HAP-1 (cell line): ENCODE measurements at regions of chr5 and their contacts with region 1.

Region 1: GRCh38 chr5:17189381-17190036 is 27.9 kb upstream of the BASP1 start:
- DNase-seq: peak; percentile 78 to 90
- H3K4me3 ChIP-seq: no peak overlapping the region
- H3K4me1 ChIP-seq: peaks cover 21% of the 10 kb centered on the region
- H3K27me3 ChIP-seq: no peaks in the 10 kb centered on the region

Region 2: DNA sequence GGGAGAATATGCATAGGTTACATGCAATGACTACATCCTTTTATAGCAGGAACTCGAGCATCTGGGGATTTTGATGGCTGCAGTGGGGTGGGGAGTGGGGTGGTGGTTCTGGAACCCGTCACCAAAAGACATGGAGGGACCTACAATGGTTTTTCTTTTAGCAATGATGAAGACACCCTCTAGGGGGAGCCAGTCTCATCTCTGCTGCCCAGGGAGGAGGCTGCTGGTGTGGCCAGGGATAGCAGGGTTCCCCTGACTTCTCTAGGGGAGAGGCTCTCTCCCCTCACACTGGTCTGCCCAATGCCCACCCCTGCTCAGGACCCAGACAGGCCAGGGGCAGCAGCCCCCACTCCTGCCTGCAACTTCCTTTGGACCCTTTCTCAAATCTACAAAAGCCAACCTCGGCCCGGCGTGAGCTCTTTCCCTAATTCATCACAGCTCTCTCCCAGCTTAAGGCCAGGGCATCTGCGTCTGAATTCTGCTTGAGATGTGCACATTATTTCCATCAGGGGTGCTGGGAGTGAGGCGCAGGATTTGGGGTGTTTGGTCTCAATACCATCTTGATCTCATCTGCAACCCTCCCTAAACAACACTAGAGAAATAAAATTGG is 499.2 kb before region 1 on chr5:
- in situ Hi-C with region 1: loop called (anchors 25 kb)
- DNase-seq: peak; percentile 50 to 76
- H3K4me3 ChIP-seq: no peak overlapping the region
- H3K4me1 ChIP-seq: peaks cover 9% of the 10 kb centered on the region
- H3K27me3 ChIP-seq: no peaks in the 10 kb centered on the region

Region 3: DNA sequence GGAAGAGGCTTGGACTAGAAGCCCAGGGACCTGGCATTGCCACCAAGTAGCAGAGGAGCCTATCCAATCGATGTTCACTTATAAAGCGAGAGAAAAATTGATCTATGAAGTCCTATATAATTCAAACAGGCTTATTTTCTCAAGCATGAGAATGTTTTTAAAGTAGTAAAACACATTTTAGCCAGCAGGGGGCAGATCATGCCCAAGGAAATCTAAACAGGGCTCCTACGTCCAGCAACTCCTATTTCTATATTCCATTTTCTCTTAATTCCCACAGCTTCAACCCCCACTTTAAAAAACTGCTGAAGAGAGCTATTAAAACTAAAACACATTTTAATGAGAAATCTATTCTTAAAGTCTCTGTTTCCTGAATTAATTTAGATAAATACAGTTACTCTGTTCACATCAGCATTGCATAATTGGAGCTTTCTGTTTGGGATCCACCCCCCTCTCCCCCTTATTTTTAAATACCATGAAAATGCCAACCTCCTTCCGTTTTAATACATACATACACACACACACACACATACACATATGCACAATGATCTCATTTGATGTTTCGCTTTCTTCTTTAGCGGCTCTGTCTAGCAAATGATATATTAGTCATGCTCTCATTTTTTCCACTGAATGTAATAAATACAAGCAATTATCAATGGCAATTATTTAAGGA is 398.3 kb before region 1 on chr5:
- in situ Hi-C with region 1: loop called (anchors 5 kb)
- DNase-seq: peak; percentile 54 to 57
- H3K4me3 ChIP-seq: no peak overlapping the region
- H3K4me1 ChIP-seq: peaks cover 8% of the 10 kb centered on the region
- H3K27me3 ChIP-seq: no peaks in the 10 kb centered on the region

Region 4: DNA sequence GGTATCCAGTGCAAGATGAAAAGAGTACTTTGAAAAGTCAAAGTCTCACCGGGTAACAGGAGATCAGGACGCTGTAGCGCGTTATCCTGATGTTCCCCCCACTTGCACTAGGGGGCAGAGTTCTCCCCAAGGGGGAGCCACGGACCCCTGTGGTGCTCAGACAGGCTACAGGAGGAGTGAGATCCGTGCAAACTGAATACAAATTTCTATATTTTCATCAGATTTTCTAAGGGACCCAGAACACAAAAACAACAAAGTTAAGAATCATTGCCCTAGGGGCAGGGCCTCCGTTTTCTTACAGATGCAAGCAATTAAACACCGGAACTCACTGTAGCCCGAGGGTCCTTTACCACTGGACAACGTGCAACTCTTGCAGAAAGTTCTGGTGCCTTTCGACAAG is 255.4 kb before region 1 on chr5:
- in situ Hi-C with region 1: loop called (anchors 5 kb)
- DNase-seq: peak; percentile 78 to 91
- H3K4me3 ChIP-seq: peak overlapping the region; percentile 87
- H3K4me1 ChIP-seq: peaks cover 34% of the 10 kb centered on the region
- H3K27me3 ChIP-seq: no peaks in the 10 kb centered on the region

Region 5: DNA sequence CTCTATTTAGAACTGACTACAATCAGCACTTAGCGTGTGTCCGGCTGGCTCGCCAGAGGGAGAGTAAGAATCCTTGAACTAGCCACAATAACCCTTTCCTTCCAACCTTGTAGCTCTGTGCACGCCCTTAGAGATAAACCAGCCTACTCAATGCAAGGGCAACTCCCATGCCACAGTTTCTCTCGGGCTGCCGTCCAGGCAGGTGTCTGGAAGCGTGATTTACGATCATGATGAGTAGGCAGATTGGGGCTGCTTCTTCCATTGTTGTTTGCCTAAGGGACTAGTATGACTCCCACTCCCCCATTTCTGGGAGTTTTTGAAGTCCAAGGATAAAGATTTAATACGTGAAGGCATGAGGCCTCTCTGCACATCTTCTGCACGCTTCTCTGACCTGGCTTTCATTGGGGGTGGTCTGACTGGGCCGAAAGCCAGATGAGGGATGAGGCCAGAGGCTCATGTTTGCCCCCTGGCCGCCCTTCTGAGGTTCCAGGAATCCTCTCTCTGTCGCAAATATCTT is 119.5 kb before region 1 on chr5:
- in situ Hi-C with region 1: no loop called
- DNase-seq: peak; percentile 37 to 69
- H3K4me3 ChIP-seq: no peak overlapping the region
- H3K4me1 ChIP-seq: peaks cover 22% of the 10 kb centered on the region
- H3K27me3 ChIP-seq: no peaks in the 10 kb centered on the region